ENCODE measurements at regions of chr5 and their contacts with region 1.

Region 1: DNA sequence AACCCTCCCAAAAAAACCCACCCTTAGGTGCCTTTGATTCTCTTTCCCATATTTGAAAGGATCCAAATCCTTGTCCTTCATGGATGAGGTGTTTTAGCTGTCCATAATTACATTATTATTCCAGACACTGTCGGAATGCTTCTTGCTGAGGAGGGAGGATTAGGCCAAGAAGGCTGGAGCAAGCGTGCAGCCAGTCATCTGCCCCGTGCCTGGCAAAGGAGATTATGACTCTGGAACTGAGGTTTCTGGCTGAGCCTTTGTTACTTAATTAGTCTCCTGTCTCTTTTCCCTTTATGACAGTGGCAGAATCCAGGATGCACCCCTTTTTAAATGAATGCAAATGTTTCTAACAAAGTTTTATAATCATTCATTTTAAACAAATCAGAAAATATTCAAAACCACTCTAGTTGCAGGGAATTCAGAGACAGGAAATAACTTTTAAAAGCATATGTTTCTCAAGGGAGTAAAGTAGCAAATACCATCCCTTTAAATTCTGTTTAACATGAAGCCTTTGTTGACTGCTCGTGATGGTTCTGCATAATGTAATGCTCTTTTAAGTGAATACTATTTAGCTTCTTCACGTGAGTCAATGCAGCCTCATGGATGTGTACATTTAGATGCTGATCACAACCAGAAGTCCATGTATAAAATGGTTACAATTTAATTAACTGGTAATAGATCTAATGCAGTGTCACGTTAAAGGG is 69.8 kb downstream of the GALNT10 start:
- DNase-seq: no peak
- H3K4me3 ChIP-seq: no peak overlapping the region
- H3K27ac ChIP-seq: no peak overlapping the region
- H3K4me1 ChIP-seq: no peaks in the 10 kb centered on the region
- H3K27me3 ChIP-seq: no peaks in the 10 kb centered on the region
- CTCF ChIP-seq: no peak
- POLR2A ChIP-seq: no peak

Region 2: GRCh38 chr5:154276973-154277331 is 16.6 kb after region 1 on chr5:
- intact Hi-C with region 1: loop called (anchors 1 kb)
- DNase-seq: no peak
- H3K4me3 ChIP-seq: no peak overlapping the region
- H3K27ac ChIP-seq: peak overlapping the region; percentile 43 to 71
- H3K4me1 ChIP-seq: peaks cover 0 to 7% of the 10 kb centered on the region in 2 donors
- H3K27me3 ChIP-seq: no peaks in the 10 kb centered on the region
- CTCF ChIP-seq: no peak
- POLR2A ChIP-seq: no peak

Region 3: DNA sequence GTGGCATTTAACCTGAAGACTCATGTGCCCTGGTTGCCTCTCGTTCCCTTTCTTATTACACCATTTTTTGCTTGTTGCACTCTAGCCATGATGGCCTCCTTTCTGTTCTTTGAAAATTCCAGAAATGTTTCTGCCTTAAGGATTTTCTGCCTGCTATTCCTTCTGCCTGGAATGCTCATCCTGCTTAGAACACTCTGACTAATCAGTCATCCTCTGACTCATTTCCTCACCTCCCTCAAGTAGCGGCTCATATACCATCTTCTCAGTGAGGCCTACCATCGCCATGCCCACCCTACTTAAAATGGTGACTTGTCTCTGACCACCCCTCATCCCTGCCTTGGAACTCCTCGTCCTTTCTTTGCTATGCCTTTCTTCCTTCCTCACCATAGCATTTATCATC is 822.0 kb after region 1 on chr5:
- intact Hi-C with region 1: loop called (anchors 5 kb)
- DNase-seq: no peak
- H3K4me3 ChIP-seq: no peak overlapping the region
- H3K27ac ChIP-seq: no peak overlapping the region
- H3K4me1 ChIP-seq: no peaks in the 10 kb centered on the region
- H3K27me3 ChIP-seq: no peaks in the 10 kb centered on the region
- CTCF ChIP-seq: no peak
- POLR2A ChIP-seq: no peak